PC-9 (cell line): ENCODE measurements at regions of chr1 and their contacts with region 1.

Region 1: DNA sequence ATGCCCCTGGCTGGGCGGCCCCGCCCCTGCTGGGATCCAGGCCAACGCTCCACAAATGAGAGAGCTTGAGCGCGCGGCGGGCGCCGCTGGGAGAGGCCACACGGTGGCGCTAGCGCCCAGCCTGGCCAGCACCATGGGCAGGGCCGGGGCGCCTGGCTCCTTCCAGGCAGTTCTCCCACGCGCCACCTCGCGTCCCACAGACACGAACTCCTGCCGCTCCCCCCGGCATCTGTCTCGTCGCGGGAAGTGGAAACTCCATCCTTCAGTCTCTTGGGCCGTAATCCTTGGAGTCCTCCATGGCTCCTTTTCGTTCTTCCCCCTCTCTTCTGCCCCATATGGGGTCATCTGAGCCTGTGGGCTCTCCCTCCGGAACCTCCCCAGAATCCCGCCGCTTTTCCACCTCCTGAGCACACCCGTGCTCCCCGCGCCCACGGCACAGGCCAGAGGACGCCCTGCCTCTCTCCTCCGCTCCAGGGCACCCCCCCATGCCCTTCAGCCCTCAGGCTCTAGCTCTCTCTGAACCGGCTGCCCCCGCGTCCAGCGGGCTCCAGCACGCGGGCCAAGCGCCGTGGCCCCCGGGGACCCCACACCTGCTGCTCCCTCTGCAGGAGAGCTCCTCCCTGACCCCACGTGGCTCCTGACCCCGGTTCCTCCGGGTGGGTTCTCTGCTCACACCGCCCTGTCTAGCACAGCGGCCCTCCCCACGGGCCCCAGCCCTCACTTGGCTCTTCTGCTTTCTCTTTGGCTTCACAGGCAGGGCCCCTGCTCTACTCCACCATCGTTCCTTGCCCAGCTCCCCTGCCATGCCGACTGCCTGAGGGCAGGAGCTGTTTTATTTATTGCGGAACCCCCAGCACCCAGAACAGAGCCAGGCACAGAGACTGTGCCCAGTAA is 31.9 kb upstream of the EDN2 start:
- DNase-seq: peak; percentile 62 to 96
- H3K4me3 ChIP-seq: peak overlapping the region; percentile 49; the same call in 1 of the 2 replicates
- H3K27ac ChIP-seq: peak overlapping the region; percentile 96
- H3K4me1 ChIP-seq: peaks cover 42% of the 10 kb centered on the region
- H3K27me3 ChIP-seq: no peaks in the 10 kb centered on the region
- CTCF ChIP-seq: peak; percentile 87

Region 2: GRCh38 chr1:41322835-41323627 is 193.4 kb before region 1 on chr1:
- CTCF ChIA-PET with region 1: interaction called, 5 read pairs
- POLR2A ChIA-PET with region 1: no interaction called
- intact Hi-C with region 1: loop called (anchors 2 kb)
- DNase-seq: peak; percentile 60 to 82
- H3K4me3 ChIP-seq: no peak overlapping the region
- H3K27ac ChIP-seq: no peak overlapping the region
- H3K4me1 ChIP-seq: peaks cover 15% of the 10 kb centered on the region
- H3K27me3 ChIP-seq: no peaks in the 10 kb centered on the region
- CTCF ChIP-seq: peak; percentile 84

Region 3: DNA sequence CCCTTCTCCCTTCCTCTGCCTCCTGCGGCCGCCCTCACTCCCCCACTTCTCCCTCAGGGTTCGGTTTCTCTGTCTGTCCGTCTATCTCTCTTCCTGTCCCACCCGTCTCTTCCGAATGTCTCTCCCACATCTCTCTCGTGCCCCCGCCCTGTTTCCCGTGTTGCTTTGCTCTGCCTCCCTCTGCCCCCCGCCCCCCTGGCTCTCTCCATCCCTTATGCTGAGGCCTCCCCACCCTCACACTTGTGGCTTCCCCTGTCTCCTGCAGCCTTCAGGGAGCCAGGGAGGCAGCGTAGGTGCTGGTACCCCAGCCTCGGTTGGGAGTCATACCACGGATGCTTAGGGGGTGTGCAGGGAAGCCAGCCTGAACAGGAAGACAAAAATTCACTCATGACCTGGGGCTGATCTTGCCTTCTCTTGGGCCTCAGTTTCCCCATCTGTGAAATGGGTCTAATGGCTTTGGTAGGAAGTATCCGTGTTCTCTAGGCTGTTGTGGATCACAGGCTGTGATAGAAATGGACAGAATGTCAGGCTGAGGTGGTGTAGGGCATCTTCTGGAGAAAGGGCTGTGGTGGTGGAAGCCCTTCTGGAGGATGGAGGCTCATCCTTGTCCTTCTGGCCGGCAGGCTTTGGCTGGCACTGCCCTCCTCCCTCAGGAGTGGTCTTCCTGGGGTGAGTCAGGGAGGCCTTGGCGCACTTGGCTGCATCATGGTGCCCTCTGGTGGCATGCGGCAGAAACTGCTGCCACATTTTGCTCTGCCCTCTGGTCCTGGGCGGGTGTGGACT is 99.7 kb before region 1 on chr1:
- CTCF ChIA-PET with region 1: interaction called, 3 read pairs
- POLR2A ChIA-PET with region 1: no interaction called
- intact Hi-C with region 1: loop called (anchors 1 kb)
- DNase-seq: peak; percentile 73 to 81
- H3K4me3 ChIP-seq: no peak overlapping the region
- H3K27ac ChIP-seq: no peak overlapping the region
- H3K4me1 ChIP-seq: peaks cover 39% of the 10 kb centered on the region
- H3K27me3 ChIP-seq: no peaks in the 10 kb centered on the region
- CTCF ChIP-seq: peak; percentile 95

Region 4: DNA sequence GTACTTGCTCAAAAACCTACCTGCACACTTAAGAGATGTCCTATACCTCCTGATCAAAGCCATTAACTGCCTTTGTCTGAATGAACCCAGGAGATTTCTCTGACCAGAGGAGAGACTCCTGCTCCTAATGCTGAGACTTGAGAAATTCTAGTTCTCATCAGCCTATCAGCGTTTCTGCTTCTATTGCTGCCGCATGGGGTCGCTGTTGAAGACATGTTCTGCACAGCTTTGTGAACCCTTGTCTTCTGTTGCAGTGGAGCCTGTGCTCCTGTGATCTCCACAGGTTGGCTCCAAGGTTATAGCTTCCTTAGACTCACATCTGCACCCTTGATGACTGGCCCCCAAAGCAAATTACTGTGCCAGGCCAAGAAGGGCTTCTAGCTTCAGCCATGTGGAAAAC is 72.2 kb before region 1 on chr1:
- CTCF ChIA-PET with region 1: no interaction called
- POLR2A ChIA-PET with region 1: no interaction called
- intact Hi-C with region 1: no loop called
- DNase-seq: no peak
- H3K4me3 ChIP-seq: no peak overlapping the region
- H3K27ac ChIP-seq: no peak overlapping the region
- H3K4me1 ChIP-seq: peaks cover 11% of the 10 kb centered on the region; the same call in 1 of the 2 replicates
- H3K27me3 ChIP-seq: no peaks in the 10 kb centered on the region
- CTCF ChIP-seq: peak; percentile 57

Region 5: GRCh38 chr1:41468118-41468762 is 48.2 kb before region 1 on chr1:
- CTCF ChIA-PET with region 1: no interaction called
- POLR2A ChIA-PET with region 1: no interaction called
- intact Hi-C with region 1: loop called (anchors 1 kb)
- DNase-seq: peak; percentile 70 to 73
- H3K4me3 ChIP-seq: no peak overlapping the region
- H3K27ac ChIP-seq: no peak overlapping the region
- H3K4me1 ChIP-seq: peaks cover 36% of the 10 kb centered on the region
- H3K27me3 ChIP-seq: no peaks in the 10 kb centered on the region
- CTCF ChIP-seq: no peak

Region 6: GRCh38 chr1:41504114-41505035 is 12.0 kb before region 1 on chr1:
- CTCF ChIA-PET with region 1: interaction called, 3 read pairs
- POLR2A ChIA-PET with region 1: interaction called, 7 read pairs
- intact Hi-C with region 1: loop called (anchors 1 kb)
- DNase-seq: peak; percentile 81 to 96
- H3K4me3 ChIP-seq: no peak overlapping the region
- H3K27ac ChIP-seq: peak overlapping the region; percentile 78
- H3K4me1 ChIP-seq: peaks cover 63% of the 10 kb centered on the region
- H3K27me3 ChIP-seq: no peaks in the 10 kb centered on the region
- CTCF ChIP-seq: no peak

Region 7: GRCh38 chr1:42456010-42456758 is 939.8 kb after region 1 on chr1 and contains the starts of genes PPCS and ZMYND12:
- CTCF ChIA-PET with region 1: interaction called, 10 read pairs
- POLR2A ChIA-PET with region 1: no interaction called
- intact Hi-C with region 1: no loop called
- DNase-seq: peak; percentile 73 to 90
- H3K4me3 ChIP-seq: peak within 1 kb of the TSS; percentile 91
- H3K27ac ChIP-seq: peak within 1 kb of the TSS; percentile 70
- H3K4me1 ChIP-seq: peaks cover 26% of the 10 kb centered on the region
- H3K27me3 ChIP-seq: no peaks in the 10 kb centered on the region
- CTCF ChIP-seq: no peak
- total RNA-seq, gene PPCS: 73.0 and 76.0 TPM in 2 replicates
- total RNA-seq, gene ZMYND12: 1.7 and 3.7 TPM in 2 replicates